AG04450 (cell line): ENCODE measurements at regions of chr11 and their contacts with region 1.

Region 1: GRCh38 chr11:8006349-8006977 is 19.3 kb downstream of the EIF3F start:
- DNase-seq: peak; percentile 44
- H3K4me3 ChIP-seq: no peak overlapping the region
- H3K27ac ChIP-seq: no peak overlapping the region
- H3K27me3 ChIP-seq: peaks cover 5% of the 10 kb centered on the region
- CTCF ChIP-seq: peak; percentile 96

Region 2: DNA sequence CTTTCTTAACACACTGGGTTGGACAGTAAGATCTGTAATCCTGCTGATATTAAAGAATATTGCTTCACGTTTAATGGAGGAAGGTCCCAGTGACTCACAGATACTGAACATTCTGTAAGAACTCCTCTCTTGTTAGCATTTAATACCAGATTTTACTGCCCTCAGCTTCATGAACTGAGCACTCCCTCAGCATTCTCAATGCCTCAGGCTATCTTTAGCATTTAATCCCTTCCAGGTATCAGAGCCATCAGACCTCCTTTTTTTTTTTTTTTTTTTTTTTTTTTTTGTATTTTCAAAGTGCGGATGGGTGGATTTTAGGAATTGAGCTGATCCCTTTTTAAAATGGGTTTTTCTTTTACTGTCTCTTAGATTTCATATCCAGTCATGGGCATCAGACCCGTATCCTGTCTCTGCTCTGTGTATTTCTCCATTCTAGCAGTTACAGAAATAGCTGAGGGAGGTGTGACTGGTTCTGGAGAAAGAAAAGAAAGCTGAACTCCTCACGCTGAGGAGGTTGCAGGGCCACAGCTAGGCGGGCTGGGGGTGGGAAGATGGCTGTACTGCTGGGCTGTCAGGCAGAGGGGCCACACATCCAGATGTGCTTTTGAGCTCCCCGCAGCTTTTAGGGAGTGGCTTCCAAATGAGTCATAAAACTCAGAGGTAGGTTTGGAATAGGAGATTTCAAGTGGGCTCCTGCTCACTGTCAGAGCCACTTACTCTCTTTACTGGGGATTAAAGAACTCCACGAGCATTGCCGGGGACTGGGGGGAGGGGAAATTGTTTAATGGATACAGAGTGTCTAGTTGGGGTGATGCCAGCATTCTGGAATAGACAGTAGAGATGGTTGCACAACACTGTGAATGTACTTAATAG is 657.8 kb before region 1 on chr11:
- CTCF ChIA-PET with region 1: no interaction called
- POLR2A ChIA-PET with region 1: no interaction called
- DNase-seq: no peak
- H3K4me3 ChIP-seq: no peak overlapping the region
- H3K27ac ChIP-seq: no peak overlapping the region
- H3K27me3 ChIP-seq: no peaks in the 10 kb centered on the region
- CTCF ChIP-seq: no peak

Region 3: GRCh38 chr11:7892840-7893254 is 113.6 kb before region 1 on chr11:
- CTCF ChIA-PET with region 1: interaction called, 13 read pairs
- POLR2A ChIA-PET with region 1: no interaction called
- DNase-seq: peak; percentile 50
- H3K4me3 ChIP-seq: no peak overlapping the region
- H3K27ac ChIP-seq: peak overlapping the region; percentile 42
- H3K27me3 ChIP-seq: no peaks in the 10 kb centered on the region
- CTCF ChIP-seq: peak; percentile 72

Region 4: DNA sequence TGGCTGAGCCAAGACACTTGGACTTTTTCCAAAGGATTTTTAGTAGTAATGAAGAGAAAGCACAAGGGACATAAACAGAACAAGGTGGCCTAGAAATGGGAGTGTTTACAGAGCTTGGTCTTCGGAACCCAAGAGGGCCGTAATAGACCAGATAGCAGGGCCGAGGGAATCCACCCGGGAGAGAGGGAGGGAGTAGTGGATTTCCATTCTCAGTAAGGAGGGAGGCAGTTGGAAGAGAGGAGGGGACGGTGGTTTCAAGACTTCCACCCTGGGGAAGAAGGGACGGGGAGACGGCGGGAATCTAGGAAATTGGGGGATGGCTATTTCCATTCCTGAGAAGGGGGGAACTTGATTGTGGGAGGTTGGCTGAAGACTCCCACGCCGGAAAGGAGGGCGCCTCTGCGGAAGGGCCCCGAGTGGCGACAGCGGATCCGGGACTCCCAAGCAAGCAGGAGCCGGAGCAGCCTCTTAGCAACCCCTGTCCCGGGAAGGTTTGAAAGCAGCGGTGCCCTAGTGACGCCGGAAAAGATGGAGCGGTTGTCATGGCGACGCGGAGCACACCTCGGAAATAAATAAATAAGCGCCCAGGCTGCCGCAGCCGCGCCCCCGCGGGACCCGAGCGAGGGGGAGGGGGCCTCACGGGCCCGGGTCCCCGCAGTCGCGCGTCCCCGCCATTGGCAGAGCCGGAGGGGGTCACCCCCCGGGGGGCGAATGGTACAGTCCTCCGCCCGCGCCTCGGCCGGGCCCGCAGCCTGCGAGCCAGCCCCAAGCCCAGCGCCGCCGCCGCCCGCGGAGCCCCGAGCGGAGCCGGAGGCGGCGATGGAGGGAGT is 12.2 kb after region 1 on chr11:
- CTCF ChIA-PET with region 1: interaction called, 35 read pairs
- POLR2A ChIA-PET with region 1: interaction called, 3 read pairs
- DNase-seq: peak; percentile 16
- H3K4me3 ChIP-seq: peak overlapping the region; percentile 70
- H3K27ac ChIP-seq: no peak overlapping the region
- H3K27me3 ChIP-seq: peaks cover 2% of the 10 kb centered on the region
- CTCF ChIP-seq: no peak

Region 5: DNA sequence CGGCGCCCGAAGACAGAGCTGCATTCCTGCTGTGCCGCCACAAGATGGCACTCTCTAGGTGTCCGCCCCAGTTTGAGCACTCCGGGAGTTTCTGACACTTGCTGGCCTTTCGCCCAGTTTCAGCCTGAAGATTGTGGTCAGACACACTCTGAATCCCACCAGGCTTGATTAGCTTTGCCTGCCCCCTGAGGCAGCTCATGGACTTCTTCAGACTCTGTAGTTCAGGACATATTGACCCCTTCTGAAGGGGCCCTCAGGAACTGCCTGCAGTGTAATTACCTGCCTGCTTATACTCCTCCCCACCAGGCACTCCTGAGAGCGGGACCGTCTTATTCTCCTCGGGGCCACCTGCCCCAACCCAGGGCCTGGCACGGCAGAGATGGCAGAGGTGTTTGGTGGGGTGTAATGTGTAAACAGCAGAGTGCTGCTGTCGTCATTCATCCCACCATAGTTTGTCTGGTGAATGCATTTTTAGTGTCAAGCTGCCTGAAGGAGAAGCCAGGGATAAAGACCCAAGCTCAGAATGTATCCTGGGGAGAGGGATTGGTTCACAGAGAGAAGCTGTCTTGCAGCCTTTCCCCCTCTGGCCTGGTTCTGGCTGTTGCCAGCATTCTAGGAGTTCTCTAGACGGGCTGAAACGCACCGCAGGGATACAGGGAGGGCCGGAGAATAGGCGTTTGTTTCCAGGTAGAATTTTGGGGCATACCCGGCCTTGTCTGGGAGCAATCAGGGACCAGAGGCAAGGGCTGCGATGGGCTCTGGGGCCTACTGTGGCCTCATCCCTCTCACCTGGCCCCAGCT is 27.0 kb after region 1 on chr11:
- CTCF ChIA-PET with region 1: interaction called, 31 read pairs
- POLR2A ChIA-PET with region 1: no interaction called
- DNase-seq: peak; percentile 70
- H3K4me3 ChIP-seq: no peak overlapping the region
- H3K27ac ChIP-seq: no peak overlapping the region
- H3K27me3 ChIP-seq: no peaks in the 10 kb centered on the region
- CTCF ChIP-seq: peak; percentile 89

Region 6: DNA sequence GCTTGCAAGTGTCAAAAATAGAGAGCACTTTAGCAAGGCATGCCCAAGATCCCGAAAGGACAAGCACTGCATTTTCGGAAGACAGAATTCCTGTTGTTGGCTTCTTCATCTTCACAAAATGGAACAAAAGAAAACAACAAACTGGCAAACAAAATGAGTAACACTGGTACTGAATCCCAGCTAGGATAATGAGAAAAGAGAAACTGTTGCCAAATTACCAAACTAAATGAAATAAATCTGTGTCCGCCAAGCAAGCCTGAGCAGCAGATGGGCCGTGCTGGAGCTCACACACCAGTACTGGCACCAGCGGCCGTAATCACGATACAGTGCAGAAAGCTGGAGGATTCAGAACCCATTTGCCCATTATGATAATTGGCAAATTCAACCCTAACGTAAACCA is 105.2 kb after region 1 on chr11:
- CTCF ChIA-PET with region 1: interaction called, 39 read pairs
- POLR2A ChIA-PET with region 1: no interaction called
- DNase-seq: no peak
- H3K4me3 ChIP-seq: no peak overlapping the region
- H3K27ac ChIP-seq: no peak overlapping the region
- H3K27me3 ChIP-seq: peaks cover 7% of the 10 kb centered on the region
- CTCF ChIP-seq: no peak